HCT116 (cell line): ENCODE measurements at regions of chr2 and their contacts with region 1.

Region 1: GRCh38 chr2:198309673-198310280 is 505.4 kb downstream of the PLCL1 start:
- DNase-seq: peak; percentile 37
- ATAC-seq: peak; percentile 73
- H3K4me3 ChIP-seq: no peak overlapping the region
- H3K27ac ChIP-seq: no peak overlapping the region
- H3K4me1 ChIP-seq: no peaks in the 10 kb centered on the region
- H3K27me3 ChIP-seq: peaks cover 25% of the 10 kb centered on the region; the same call in 1 of the 2 replicates
- CTCF ChIP-seq: peak; percentile 56 to 81 (median 78)
- POLR2A ChIP-seq: no peak
- RAD21 ChIP-seq: peak; percentile 68

Region 2: DNA sequence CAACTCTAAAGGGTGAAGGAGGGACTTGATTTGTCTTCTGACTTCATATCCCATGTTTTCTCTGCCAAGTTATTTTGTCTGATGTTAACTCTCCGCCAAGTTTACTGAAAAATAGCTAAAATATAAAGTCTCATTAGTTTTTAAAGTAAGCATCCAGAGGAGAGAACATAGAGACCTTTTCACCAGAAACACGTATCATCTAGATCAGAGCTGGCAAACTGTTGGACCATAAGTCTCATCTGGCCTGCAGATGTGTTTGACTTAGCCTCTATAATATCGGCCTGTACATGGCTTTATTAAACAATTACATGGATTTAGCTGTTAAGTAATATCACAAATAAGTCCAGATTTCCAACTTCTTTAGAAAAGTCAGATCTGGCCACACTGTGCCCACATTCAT is 322.8 kb before region 1 on chr2:
- CTCF ChIA-PET with region 1: no interaction called
- POLR2A ChIA-PET with region 1: no interaction called
- RAD21 ChIA-PET with region 1: no interaction called
- intact Hi-C with region 1: no loop called
- DNase-seq: no peak
- ATAC-seq: no peak
- H3K4me3 ChIP-seq: no peak overlapping the region
- H3K27ac ChIP-seq: no peak overlapping the region
- H3K4me1 ChIP-seq: no peaks in the 10 kb centered on the region
- H3K27me3 ChIP-seq: peaks cover 5% of the 10 kb centered on the region
- CTCF ChIP-seq: no peak
- POLR2A ChIP-seq: no peak
- RAD21 ChIP-seq: no peak

Region 3: GRCh38 chr2:198004921-198005829 is 304.6 kb before region 1 on chr2:
- CTCF ChIA-PET with region 1: no interaction called
- POLR2A ChIA-PET with region 1: no interaction called
- RAD21 ChIA-PET with region 1: no interaction called
- intact Hi-C with region 1: no loop called
- DNase-seq: no peak
- ATAC-seq: no peak
- H3K4me3 ChIP-seq: no peak overlapping the region
- H3K27ac ChIP-seq: no peak overlapping the region
- H3K4me1 ChIP-seq: no peaks in the 10 kb centered on the region
- H3K27me3 ChIP-seq: peaks cover 8% of the 10 kb centered on the region
- CTCF ChIP-seq: no peak
- POLR2A ChIP-seq: no peak
- RAD21 ChIP-seq: no peak

Region 4: GRCh38 chr2:198188982-198189381 is 120.8 kb before region 1 on chr2:
- CTCF ChIA-PET with region 1: no interaction called
- POLR2A ChIA-PET with region 1: no interaction called
- RAD21 ChIA-PET with region 1: no interaction called
- intact Hi-C with region 1: no loop called
- DNase-seq: no peak
- ATAC-seq: no peak
- H3K4me3 ChIP-seq: no peak overlapping the region
- H3K27ac ChIP-seq: no peak overlapping the region
- H3K4me1 ChIP-seq: no peaks in the 10 kb centered on the region
- H3K27me3 ChIP-seq: peaks cover 9% of the 10 kb centered on the region; the same call in 1 of the 2 replicates
- CTCF ChIP-seq: no peak
- POLR2A ChIP-seq: no peak
- RAD21 ChIP-seq: no peak

Region 5: GRCh38 chr2:198657512-198658121 is 347.8 kb after region 1 on chr2:
- CTCF ChIA-PET with region 1: no interaction called
- POLR2A ChIA-PET with region 1: no interaction called
- RAD21 ChIA-PET with region 1: no interaction called
- intact Hi-C with region 1: loop called (anchors 5 kb)
- DNase-seq: peak; percentile 28
- ATAC-seq: peak; percentile 53
- H3K4me3 ChIP-seq: no peak overlapping the region
- H3K27ac ChIP-seq: no peak overlapping the region
- H3K4me1 ChIP-seq: no peaks in the 10 kb centered on the region
- H3K27me3 ChIP-seq: no peaks in the 10 kb centered on the region
- CTCF ChIP-seq: peak; percentile 32 to 64 (median 53); a peak in 5 of 6 replicates
- POLR2A ChIP-seq: no peak
- RAD21 ChIP-seq: peak; percentile 56

Region 6: DNA sequence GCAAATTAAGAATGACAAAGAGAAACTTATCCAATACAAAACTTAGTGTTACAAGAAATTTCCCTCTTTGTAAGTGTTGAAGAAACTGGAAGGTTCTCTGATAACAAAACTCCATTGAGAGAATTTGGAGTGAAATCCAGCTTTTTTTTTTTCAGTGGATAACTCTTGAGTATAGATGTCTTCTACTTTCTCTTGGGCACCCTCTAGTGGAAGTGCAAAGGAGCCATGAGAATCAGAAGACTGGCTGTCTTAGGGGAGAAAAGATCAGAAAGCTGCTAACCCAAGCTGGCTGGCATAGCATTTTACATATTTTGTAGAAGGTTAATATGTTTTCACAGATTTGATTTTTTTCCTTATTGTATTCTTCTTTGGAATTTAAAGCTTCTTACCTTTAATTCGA is 1286.8 kb after region 1 on chr2:
- CTCF ChIA-PET with region 1: interaction called, 17 read pairs
- POLR2A ChIA-PET with region 1: no interaction called
- RAD21 ChIA-PET with region 1: no interaction called
- intact Hi-C with region 1: loop called (anchors 5 kb)
- DNase-seq: peak; percentile 24
- ATAC-seq: peak; percentile 89
- H3K4me3 ChIP-seq: no peak overlapping the region
- H3K27ac ChIP-seq: no peak overlapping the region
- H3K4me1 ChIP-seq: no peaks in the 10 kb centered on the region
- H3K27me3 ChIP-seq: no peaks in the 10 kb centered on the region
- CTCF ChIP-seq: peak; percentile 26 to 72 (median 72); a peak in 5 of 6 replicates
- POLR2A ChIP-seq: no peak
- RAD21 ChIP-seq: peak; percentile 50

Region 7: DNA sequence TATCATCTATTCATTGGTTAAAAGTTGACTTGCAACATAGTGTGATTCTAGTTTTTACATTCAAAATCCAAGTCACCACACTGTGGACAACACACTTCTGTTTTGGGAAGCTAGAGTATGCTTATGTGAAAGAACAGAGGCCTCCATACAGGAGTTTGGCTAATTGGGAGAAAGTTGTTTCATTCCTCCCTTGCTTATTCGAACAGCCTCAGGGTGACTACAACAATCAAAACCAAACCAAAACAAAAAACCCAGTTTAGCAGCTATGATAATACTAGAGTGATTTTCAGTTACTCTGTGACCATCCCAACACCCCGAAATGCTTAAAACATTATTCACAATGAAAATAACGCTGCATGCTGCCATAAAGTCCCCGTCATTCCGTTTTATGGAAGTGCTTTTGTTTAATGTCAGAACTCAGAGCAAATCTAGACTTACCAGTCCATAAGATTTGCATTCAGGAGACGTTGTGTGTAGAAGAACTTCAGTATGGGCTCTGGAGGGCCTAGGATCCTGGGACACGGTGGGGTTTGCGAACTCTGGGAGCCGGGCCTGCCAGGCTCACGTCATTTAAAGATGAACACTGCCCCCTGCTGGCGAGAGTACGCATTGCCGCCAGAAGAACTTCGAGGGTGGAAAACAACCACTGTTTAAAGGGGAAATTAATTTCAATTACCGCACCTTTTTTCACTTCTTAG is 1429.8 kb after region 1 on chr2:
- CTCF ChIA-PET with region 1: interaction called, 9 read pairs
- POLR2A ChIA-PET with region 1: no interaction called
- RAD21 ChIA-PET with region 1: no interaction called
- intact Hi-C with region 1: loop called (anchors 2 kb)
- DNase-seq: peak; percentile 42
- ATAC-seq: peak; percentile 89
- H3K4me3 ChIP-seq: no peak overlapping the region
- H3K27ac ChIP-seq: no peak overlapping the region
- H3K4me1 ChIP-seq: no peaks in the 10 kb centered on the region
- H3K27me3 ChIP-seq: peaks cover 8% of the 10 kb centered on the region; the same call in 1 of the 2 replicates
- CTCF ChIP-seq: peak; percentile 78 to 97 (median 89)
- POLR2A ChIP-seq: no peak
- RAD21 ChIP-seq: peak; percentile 87

Region 8: GRCh38 chr2:199940373-199940772 is 1630.6 kb after region 1 on chr2:
- CTCF ChIA-PET with region 1: interaction called, 5 read pairs
- POLR2A ChIA-PET with region 1: no interaction called
- RAD21 ChIA-PET with region 1: no interaction called
- intact Hi-C with region 1: loop called (anchors 10 kb)
- DNase-seq: peak; percentile 21
- ATAC-seq: peak; percentile 73; the same call in 1 of the 2 replicates
- H3K4me3 ChIP-seq: no peak overlapping the region
- H3K27ac ChIP-seq: no peak overlapping the region
- H3K4me1 ChIP-seq: no peaks in the 10 kb centered on the region
- H3K27me3 ChIP-seq: no peaks in the 10 kb centered on the region
- CTCF ChIP-seq: peak; percentile 18 to 48 (median 33); a peak in 4 of 6 replicates
- POLR2A ChIP-seq: no peak
- RAD21 ChIP-seq: peak; percentile 63